ENCODE measurements at regions of chr22 and their contacts with region 1.

Region 1: DNA sequence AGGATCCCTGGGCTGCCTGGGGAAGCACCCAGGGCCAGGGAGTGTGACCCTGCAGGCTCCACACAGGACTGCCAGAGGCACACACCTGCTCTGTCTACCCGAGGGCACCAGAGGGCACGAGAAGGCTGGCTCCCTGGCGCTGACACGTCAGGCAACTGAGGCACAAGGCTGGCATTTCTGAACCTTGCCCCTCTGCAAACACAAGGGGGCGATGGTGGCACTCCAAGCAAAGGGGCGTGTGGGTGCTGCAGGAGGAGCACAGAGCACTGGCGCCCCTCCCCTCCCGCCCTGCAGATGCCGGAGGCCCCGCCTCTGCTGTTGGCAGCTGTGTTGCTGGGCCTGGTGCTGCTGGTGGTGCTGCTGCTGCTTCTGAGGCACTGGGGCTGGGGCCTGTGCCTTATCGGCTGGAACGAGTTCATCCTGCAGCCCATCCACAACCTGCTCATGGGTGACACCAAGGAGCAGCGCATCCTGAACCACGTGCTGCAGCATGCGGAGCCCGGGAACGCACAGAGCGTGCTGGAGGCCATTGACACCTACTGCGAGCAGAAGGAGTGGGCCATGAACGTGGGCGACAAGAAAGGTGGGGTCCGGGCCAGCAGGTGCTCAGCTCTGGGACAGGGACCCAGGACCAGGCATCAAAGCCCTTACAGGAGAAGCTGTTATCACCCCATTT is 20.8 kb upstream of the TXNRD2 start:
- DNase-seq: peak; percentile 84
- ATAC-seq: peak; percentile 86
- H3K4me3 ChIP-seq: peak overlapping the region; percentile 67
- H3K27ac ChIP-seq: peak overlapping the region; percentile 83
- H3K4me1 ChIP-seq: peaks cover 21% of the 10 kb centered on the region
- H3K27me3 ChIP-seq: no peaks in the 10 kb centered on the region
- CTCF ChIP-seq: peak; percentile 59

Region 2: GRCh38 chr22:19892257-19892879 is 70.0 kb before region 1 on chr22:
- CTCF ChIA-PET with region 1: no interaction called
- POLR2A ChIA-PET with region 1: no interaction called
- intact Hi-C with region 1: no loop called
- DNase-seq: no peak
- ATAC-seq: no peak
- H3K4me3 ChIP-seq: peak overlapping the region; percentile 22; the same call in 1 of the 2 replicates
- H3K27ac ChIP-seq: peak overlapping the region; percentile 54
- H3K4me1 ChIP-seq: peaks cover 19% of the 10 kb centered on the region
- H3K27me3 ChIP-seq: no peaks in the 10 kb centered on the region
- CTCF ChIP-seq: no peak

Region 3: GRCh38 chr22:20015971-20016733 is 53.8 kb after region 1 on chr22:
- CTCF ChIA-PET with region 1: no interaction called
- POLR2A ChIA-PET with region 1: no interaction called
- intact Hi-C with region 1: loop called (anchors 2 kb)
- DNase-seq: peak; percentile 12
- ATAC-seq: peak; percentile 11
- H3K4me3 ChIP-seq: peak overlapping the region; percentile 61
- H3K27ac ChIP-seq: no peak overlapping the region
- H3K4me1 ChIP-seq: peaks cover 4% of the 10 kb centered on the region; the same call in 1 of the 2 replicates
- H3K27me3 ChIP-seq: no peaks in the 10 kb centered on the region
- CTCF ChIP-seq: no peak

Region 4: GRCh38 chr22:20656902-20657836 is 694.8 kb after region 1 on chr22:
- CTCF ChIA-PET with region 1: no interaction called
- POLR2A ChIA-PET with region 1: no interaction called
- intact Hi-C with region 1: no loop called
- DNase-seq: no peak
- ATAC-seq: no peak
- H3K4me3 ChIP-seq: no peak overlapping the region
- H3K27ac ChIP-seq: no peak overlapping the region
- H3K4me1 ChIP-seq: no peaks in the 10 kb centered on the region
- H3K27me3 ChIP-seq: peaks cover 36% of the 10 kb centered on the region
- CTCF ChIP-seq: no peak

Measured in PC-3 (cell line).